Common myeloid progenitor, CD34-positive (primary cell): ENCODE measurements at regions of chr7 and their contacts with region 1.

Region 1: DNA sequence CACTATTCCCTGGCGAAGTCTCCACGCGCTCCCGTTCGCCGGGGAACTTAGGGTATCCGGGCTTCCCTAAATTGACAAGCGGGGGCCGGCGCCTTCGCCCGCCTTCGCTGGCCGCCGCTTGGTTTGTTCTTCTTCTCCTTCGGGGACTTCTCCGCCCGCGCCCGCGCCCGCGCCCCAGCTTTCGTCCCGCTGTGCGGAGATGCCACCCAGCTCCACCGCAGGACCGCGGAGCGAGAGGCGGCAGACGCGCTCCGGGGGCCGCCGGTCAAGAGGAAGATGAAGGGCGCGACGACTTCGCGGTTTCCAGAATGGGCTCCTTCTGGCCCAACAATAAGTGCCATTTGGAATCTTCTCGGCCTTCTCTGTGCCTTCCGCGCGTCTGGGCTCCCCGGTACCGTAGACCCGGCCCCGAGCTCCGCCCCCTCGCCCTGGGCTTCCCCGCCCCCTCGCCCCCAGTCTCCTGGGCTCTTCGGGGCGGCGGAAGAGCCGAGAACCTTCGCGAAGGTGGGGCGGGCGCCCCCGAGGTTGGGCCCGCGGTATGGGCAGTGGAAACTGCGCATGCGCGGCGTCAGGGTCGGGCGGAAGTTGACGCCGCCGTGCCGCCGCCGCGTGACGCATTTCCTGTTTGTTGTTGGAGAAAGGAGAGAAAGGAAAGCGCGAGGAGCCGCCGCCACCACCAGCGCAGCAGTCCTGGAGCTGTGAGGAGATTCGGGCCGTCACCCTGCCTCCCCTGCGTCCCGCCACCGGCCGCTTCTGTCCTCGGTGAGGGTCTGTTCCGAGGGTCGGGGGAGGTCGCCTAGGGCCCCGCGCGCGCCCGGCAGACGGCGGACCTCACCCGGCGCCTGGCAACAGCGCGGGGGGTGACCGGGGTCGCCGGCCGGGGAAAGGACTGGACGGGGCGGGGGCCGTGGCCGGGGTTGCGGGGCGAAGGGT is at the start of gene DNAJB6:
- DNase-seq: peak; percentile 96 to 97 (median 97)
- H3K4me3 ChIP-seq: peak within 1 kb of the TSS; percentile 75 to 100 (median 97)
- H3K27ac ChIP-seq: peak within 1 kb of the TSS; percentile 89 to 90
- H3K4me1 ChIP-seq: peaks cover 17 to 36% (median 32%) of the 10 kb centered on the region in 4 experiments
- H3K27me3 ChIP-seq: no peaks in the 10 kb centered on the region

Region 2: GRCh38 chr7:157273208-157274093 is 63.2 kb before region 1 on chr7:
- CTCF ChIA-PET with region 1: interaction called, 43 read pairs
- POLR2A ChIA-PET with region 1: interaction called, 3 read pairs
- DNase-seq: peak; percentile 71 to 83 (median 82)
- H3K4me3 ChIP-seq: peak overlapping the region in 1 of 7 experiments; percentile 16
- H3K27ac ChIP-seq: no peak overlapping the region
- H3K4me1 ChIP-seq: peaks cover 0 to 46% (median 32%) of the 10 kb centered on the region in 4 experiments
- H3K27me3 ChIP-seq: no peaks in the 10 kb centered on the region

Region 3: GRCh38 chr7:157306846-157307838 is 29.5 kb before region 1 on chr7:
- CTCF ChIA-PET with region 1: interaction called, 17 read pairs
- POLR2A ChIA-PET with region 1: interaction called, 10 read pairs
- DNase-seq: no peak
- H3K4me3 ChIP-seq: no peak overlapping the region
- H3K27ac ChIP-seq: peak overlapping the region in 1 of 2 experiments; percentile 58
- H3K4me1 ChIP-seq: peaks cover 0 to 68% (median 35%) of the 10 kb centered on the region in 4 experiments
- H3K27me3 ChIP-seq: no peaks in the 10 kb centered on the region

Region 4: GRCh38 chr7:157323419-157323818 is 13.2 kb before region 1 on chr7:
- CTCF ChIA-PET with region 1: interaction called, 20 read pairs
- POLR2A ChIA-PET with region 1: interaction called, 5 read pairs
- DNase-seq: no peak
- H3K4me3 ChIP-seq: no peak overlapping the region
- H3K27ac ChIP-seq: no peak overlapping the region
- H3K4me1 ChIP-seq: peaks cover 3 to 32% (median 27%) of the 10 kb centered on the region in 4 experiments
- H3K27me3 ChIP-seq: no peaks in the 10 kb centered on the region

Region 5: DNA sequence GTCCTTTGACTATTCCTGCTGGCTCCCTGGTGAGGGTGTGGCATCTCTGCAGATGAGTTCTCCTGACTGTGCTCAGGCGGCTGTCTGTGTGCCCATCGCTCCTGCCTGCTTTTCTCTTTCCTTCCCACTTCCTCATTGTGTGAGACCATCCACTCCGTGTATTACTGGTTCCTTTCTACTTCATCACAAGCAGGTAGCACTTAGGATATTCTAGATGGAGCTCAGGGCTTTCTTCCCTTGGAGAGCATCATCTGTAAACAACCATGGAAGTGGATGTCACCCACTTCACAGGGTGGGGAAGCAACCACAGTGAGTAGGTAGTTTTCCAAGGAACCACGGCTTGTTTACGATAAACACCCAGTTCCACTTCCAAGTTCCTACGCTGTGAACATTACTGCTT is 15.9 kb after region 1 on chr7:
- CTCF ChIA-PET with region 1: interaction called, 14 read pairs
- POLR2A ChIA-PET with region 1: no interaction called
- DNase-seq: peak in 2 of 3 donors; percentile 45 to 71
- H3K4me3 ChIP-seq: peak overlapping the region in 4 of 7 experiments; percentile 10 to 45 (median 30)
- H3K27ac ChIP-seq: peak overlapping the region in 1 of 2 experiments; percentile 77
- H3K4me1 ChIP-seq: peaks cover 8 to 45% (median 38%) of the 10 kb centered on the region in 4 experiments
- H3K27me3 ChIP-seq: no peaks in the 10 kb centered on the region